Adrenal gland (tissue), 19 donors: ENCODE measurements at regions of chr18 and their contacts with region 1.

Region 1: DNA sequence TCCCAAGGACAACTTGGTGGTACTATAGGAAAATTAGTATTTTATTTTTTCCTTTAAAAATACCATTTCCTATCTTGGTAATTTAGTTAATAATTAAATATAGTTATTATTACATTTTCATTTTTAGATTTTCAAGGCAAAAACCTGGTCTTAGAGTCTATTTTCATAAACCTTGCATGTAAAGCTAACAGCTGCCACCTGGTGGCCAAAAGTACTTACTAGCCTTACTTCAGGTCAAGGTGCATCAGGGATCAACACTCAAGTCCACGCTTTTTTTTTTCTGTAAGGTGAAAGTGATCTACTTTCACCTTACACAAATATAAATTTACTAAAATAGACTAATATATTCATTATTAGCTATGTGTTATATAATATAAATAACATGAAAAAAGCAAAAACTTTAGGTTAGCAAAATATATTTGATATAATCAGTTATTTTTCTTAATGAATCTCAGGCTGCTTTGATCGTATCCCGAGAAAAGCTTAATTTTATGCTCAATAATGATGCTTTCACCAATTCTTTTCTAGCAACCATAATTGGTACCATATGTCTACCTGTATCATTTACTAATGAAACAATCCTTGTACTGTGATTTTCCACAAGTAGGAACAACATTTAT is 62.5 kb downstream of the RELCH start:
- DNase-seq: peak; percentile 70 to 95 (median 88)
- H3K4me3 ChIP-seq: no peak overlapping the region
- H3K27ac ChIP-seq: no peak overlapping the region
- H3K4me1 ChIP-seq: no peaks in the 10 kb centered on the region
- H3K27me3 ChIP-seq: no peaks in the 10 kb centered on the region
- CTCF ChIP-seq: peak; percentile 65 to 86 (median 74)
- POLR2A ChIP-seq: no peak

Region 2: GRCh38 chr18:62183578-62184195 is 65.9 kb before region 1 on chr18:
- intact Hi-C with region 1: loop called (anchors 5 kb)
- DNase-seq: peak in 5 of 7 donors; percentile 29 to 59 (median 57)
- H3K4me3 ChIP-seq: no peak overlapping the region
- H3K27ac ChIP-seq: no peak overlapping the region
- H3K4me1 ChIP-seq: peaks cover 6 to 28% of the 10 kb centered on the region in 2 donors
- H3K27me3 ChIP-seq: no peaks in the 10 kb centered on the region
- CTCF ChIP-seq: peak; percentile 30 to 99 (median 95)
- POLR2A ChIP-seq: no peak